ENCODE measurements at regions of chr16 and their contacts with region 1.

Region 1: GRCh38 chr16:77675464-77676324 is 46.6 kb upstream of the NUDT7 start:
- DNase-seq: peak; percentile 78
- ATAC-seq: peak; percentile 84
- H3K4me3 ChIP-seq: no peak overlapping the region
- H3K27ac ChIP-seq: no peak overlapping the region
- H3K4me1 ChIP-seq: peaks cover 1% of the 10 kb centered on the region; the same call in 1 of the 2 replicates
- H3K27me3 ChIP-seq: no peaks in the 10 kb centered on the region; the same call in none of the 2 replicates
- CTCF ChIP-seq: peak; percentile 97
- POLR2A ChIP-seq: no peak
- RAD21 ChIP-seq: peak; percentile 100

Region 2: DNA sequence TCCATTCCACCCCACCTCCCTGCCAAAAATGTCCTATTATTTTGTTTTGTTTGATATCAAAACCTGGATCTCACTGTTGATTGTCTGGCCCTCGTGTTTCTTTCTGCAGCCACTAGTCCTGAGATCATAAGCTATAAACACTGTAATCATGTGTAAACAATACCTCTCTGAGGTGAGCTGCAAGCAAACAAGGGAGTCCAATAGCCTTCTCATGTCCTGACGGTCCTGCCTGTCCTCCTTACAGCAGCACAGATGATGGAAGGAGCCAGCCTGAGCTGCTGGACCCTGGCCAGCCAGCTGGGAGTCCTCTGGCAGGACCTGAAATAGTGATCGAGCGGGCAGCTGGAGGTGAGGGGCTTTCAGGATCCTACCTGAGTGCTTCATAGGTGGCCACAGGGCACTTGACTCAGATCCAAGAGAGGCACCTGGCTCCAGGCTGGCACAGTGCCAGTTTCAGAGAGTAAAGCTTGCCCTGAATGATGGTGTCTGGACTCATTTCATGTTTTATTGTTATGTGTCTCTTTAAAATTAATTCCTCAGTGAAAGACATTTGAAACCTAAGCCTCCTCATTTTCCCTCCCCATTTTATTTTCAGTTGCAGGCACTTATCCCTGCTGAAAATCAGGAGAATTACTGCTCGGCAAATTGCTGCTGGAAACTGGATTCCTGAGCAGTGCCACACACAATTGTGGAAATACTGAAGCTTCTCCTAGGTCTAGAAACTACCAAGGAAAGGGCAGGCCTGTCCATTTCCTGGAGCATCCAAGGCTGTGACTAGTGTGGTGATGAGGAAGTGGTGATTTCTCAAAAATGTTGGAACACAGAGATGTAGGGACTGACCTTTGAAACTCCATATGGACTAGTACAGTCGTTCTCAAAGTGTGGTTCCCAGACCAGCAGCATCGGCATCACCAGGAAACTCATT is 224.9 kb before region 1 on chr16:
- CTCF ChIA-PET with region 1: no interaction called
- POLR2A ChIA-PET with region 1: no interaction called
- dilution Hi-C with region 1: no loop called
- in situ Hi-C with region 1: no loop called
- intact Hi-C with region 1: no loop called
- DNase-seq: no peak
- ATAC-seq: no peak
- H3K4me3 ChIP-seq: no peak overlapping the region
- H3K27ac ChIP-seq: no peak overlapping the region
- H3K4me1 ChIP-seq: no peaks in the 10 kb centered on the region
- H3K27me3 ChIP-seq: no peaks in the 10 kb centered on the region
- CTCF ChIP-seq: no peak
- POLR2A ChIP-seq: no peak
- RAD21 ChIP-seq: no peak

Region 3: DNA sequence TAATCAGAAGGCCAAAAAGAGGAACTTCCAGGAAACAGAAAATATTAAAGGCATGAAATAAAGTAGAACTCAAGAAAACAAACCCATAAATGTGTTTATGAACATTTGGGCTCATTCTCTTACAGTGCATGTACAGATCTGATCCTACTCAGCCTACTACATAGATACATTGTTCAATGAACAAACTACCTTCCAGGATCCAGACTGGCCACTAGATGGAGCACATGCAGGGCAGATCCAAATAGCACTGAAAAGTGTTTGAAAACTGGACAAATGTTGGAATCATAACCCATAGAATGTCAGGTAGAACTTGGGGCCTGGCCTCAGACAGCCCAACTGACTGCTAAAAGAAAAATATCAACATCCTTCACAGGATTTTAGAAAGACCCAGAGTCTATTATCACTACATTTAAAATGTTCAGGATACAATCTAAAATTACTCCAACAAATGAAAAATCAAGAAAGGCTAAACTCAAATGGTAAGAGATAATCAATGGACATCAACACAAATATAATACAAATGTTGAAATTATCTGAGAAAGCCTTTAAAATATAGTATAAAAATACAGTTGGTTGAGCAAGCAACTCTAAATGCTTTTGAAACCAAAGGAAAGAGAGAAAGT is 75.8 kb before region 1 on chr16:
- CTCF ChIA-PET with region 1: interaction called, 3 read pairs
- POLR2A ChIA-PET with region 1: no interaction called
- dilution Hi-C with region 1: no loop called
- in situ Hi-C with region 1: no loop called
- intact Hi-C with region 1: loop called (anchors 1 kb)
- DNase-seq: peak; percentile 47
- ATAC-seq: peak; percentile 84
- H3K4me3 ChIP-seq: no peak overlapping the region
- H3K27ac ChIP-seq: no peak overlapping the region
- H3K4me1 ChIP-seq: no peaks in the 10 kb centered on the region
- H3K27me3 ChIP-seq: peaks cover 2% of the 10 kb centered on the region; the same call in 1 of the 2 replicates
- CTCF ChIP-seq: peak; percentile 76
- POLR2A ChIP-seq: no peak
- RAD21 ChIP-seq: peak; percentile 73

Region 4: GRCh38 chr16:77617990-77618389 is 57.7 kb before region 1 on chr16:
- CTCF ChIA-PET with region 1: no interaction called
- POLR2A ChIA-PET with region 1: no interaction called
- dilution Hi-C with region 1: no loop called
- in situ Hi-C with region 1: no loop called
- intact Hi-C with region 1: no loop called
- DNase-seq: no peak
- ATAC-seq: no peak
- H3K4me3 ChIP-seq: no peak overlapping the region
- H3K27ac ChIP-seq: no peak overlapping the region
- H3K4me1 ChIP-seq: no peaks in the 10 kb centered on the region
- H3K27me3 ChIP-seq: no peaks in the 10 kb centered on the region
- CTCF ChIP-seq: no peak
- POLR2A ChIP-seq: no peak
- RAD21 ChIP-seq: no peak

Region 5: DNA sequence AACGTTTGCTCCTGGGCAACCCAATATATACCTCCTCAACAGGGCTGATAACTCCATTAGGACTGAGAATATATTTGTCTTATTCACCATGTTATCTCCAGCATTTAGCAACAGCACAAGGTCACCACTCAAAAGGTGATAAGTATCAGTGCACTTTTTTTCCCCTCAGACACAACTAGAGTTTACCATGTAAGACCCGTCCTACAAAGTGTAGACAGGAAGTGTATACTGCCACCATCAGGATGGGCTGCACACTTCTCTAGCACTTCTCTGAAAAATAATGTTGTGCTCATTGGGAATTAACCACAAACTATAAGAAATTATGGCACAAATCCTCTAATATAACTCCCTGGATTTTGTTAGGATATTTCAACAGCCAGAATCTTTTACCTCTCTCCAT is 107.0 kb after region 1 on chr16:
- CTCF ChIA-PET with region 1: interaction called, 3 read pairs
- POLR2A ChIA-PET with region 1: no interaction called
- dilution Hi-C with region 1: no loop called
- in situ Hi-C with region 1: no loop called
- intact Hi-C with region 1: loop called (anchors 2 kb)
- DNase-seq: peak; percentile 46
- ATAC-seq: no peak
- H3K4me3 ChIP-seq: no peak overlapping the region
- H3K27ac ChIP-seq: no peak overlapping the region
- H3K4me1 ChIP-seq: peaks cover 5% of the 10 kb centered on the region
- H3K27me3 ChIP-seq: no peaks in the 10 kb centered on the region
- CTCF ChIP-seq: peak; percentile 60
- POLR2A ChIP-seq: no peak
- RAD21 ChIP-seq: peak; percentile 49

Region 6: DNA sequence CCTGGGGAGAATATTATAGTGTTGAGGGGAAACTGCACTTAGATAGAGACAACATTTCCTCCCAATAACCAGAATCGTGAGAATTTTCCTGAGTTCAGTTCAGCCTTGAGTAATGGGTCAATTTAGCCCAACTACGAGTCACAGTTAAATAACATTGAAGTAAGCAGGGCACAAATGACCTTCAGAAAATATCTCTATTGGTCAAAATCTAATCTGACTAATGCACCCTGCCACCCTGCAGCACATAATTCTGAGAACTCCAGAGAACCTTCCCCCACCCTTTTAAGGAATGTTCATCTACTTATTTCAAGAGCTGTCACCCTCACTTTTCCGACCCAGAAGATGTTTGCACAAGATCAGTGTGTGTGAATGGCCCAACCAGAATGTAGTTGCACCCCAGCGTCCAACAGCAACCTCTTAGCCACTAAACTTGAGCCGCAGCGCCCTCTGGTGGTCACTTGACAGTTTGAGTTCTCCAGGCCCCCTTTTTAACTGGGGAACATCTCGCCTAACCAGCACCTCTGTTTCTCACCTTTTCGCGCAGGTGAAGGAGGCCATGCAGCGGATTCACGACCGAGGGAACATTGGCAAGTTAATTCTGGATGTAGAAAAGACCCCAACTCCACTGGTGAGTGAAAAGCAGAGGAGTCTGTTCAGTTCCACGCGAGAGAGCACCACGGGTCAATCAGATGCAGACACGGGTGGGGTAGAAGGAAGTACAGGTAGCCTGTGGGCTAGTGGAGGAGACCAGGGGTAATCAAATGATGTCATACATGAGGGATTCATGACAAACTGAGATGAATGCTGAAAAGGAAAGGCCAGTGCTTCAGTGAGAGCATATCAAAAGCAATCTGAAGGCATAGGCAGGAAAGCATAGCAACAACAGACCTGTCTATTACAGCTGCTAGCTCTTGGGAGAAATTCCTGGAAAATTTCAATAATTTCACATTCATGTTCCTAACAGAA is 295.9 kb after region 1 on chr16:
- CTCF ChIA-PET with region 1: interaction called, 4 read pairs
- POLR2A ChIA-PET with region 1: no interaction called
- dilution Hi-C with region 1: no loop called
- in situ Hi-C with region 1: loop called (anchors 5 kb)
- intact Hi-C with region 1: loop called (anchors 1 kb)
- DNase-seq: peak; percentile 75
- ATAC-seq: peak; percentile 96
- H3K4me3 ChIP-seq: no peak overlapping the region
- H3K27ac ChIP-seq: no peak overlapping the region
- H3K4me1 ChIP-seq: no peaks in the 10 kb centered on the region
- H3K27me3 ChIP-seq: no peaks in the 10 kb centered on the region
- CTCF ChIP-seq: peak; percentile 81
- POLR2A ChIP-seq: peak; percentile 42; the same call in 1 of the 2 replicates
- RAD21 ChIP-seq: peak; percentile 94

Region 7: DNA sequence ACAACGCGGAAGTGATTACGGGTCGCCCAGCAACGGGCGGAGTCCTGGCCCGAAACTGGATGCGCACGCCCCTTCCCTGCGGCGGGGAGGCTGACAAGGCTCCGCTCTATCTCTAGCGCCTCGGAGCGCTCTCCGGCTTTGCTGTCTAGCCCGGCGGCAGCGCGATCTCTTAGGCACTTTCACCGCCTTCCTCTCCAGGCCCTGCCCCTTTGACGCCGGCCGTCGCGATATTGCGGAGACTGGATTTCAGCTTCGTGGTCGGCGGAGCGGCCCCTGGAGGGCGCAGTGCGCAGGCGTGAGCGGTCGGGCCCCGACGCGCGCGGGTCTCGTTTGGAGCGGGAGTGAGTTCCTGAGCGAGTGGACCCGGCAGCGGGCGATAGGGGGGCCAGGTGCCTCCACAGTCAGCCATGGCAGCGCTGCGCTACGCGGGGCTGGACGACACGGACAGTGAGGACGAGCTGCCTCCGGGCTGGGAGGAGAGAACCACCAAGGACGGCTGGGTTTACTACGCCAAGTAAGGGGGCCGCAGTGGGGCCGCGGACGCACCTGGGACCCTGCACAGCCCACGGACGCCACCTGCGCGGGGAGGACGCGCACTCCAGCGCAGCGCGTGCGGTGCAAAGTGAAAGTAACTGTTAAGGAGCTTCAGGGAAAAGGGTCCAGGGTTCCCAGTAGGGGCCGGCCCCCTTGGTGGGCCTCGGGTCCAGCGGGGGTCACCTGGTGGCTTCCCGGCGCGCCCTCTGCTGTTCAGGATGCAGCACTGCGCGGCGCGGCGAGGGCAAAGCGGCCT is 423.9 kb after region 1 on chr16 and contains the start of gene WWOX:
- CTCF ChIA-PET with region 1: no interaction called
- POLR2A ChIA-PET with region 1: no interaction called
- dilution Hi-C with region 1: no loop called
- in situ Hi-C with region 1: no loop called
- intact Hi-C with region 1: loop called (anchors 1 kb)
- DNase-seq: peak; percentile 98
- ATAC-seq: peak; percentile 99
- H3K4me3 ChIP-seq: peak within 1 kb of the TSS; percentile 80
- H3K27ac ChIP-seq: peak within 1 kb of the TSS; percentile 52
- H3K4me1 ChIP-seq: no peaks in the 10 kb centered on the region
- H3K27me3 ChIP-seq: no peaks in the 10 kb centered on the region
- CTCF ChIP-seq: peak; percentile 70
- POLR2A ChIP-seq: no peak
- RAD21 ChIP-seq: no peak
- total RNA-seq, gene WWOX: 5.4 and 8.9 TPM in 2 replicates